ENCODE measurements at regions of chr1 and their contacts with region 1.

Region 1: GRCh38 chr1:154220071-154220969 is at the start of gene UBAP2L:
- DNase-seq: peak; percentile 99
- ATAC-seq: peak; percentile 88
- H3K4me3 Mint-ChIP-seq: peak within 1 kb of the TSS; percentile 99
- H3K27ac Mint-ChIP-seq: peak within 1 kb of the TSS; percentile 98
- H3K4me1 Mint-ChIP-seq: peaks cover 62% of the 10 kb centered on the region
- H3K27me3 Mint-ChIP-seq: no peaks in the 10 kb centered on the region
- total RNA-seq, gene UBAP2L: 176 to 179 TPM

Region 2: GRCh38 chr1:154183045-154183915 is 37.0 kb before region 1 on chr1:
- CTCF ChIA-PET with region 1: interaction called, 3 read pairs
- POLR2A ChIA-PET with region 1: interaction called, 18 read pairs
- DNase-seq: peak; percentile 97
- ATAC-seq: peak; percentile 72
- H3K4me3 Mint-ChIP-seq: peak overlapping the region; percentile 99
- H3K27ac Mint-ChIP-seq: peak overlapping the region; percentile 100
- H3K4me1 Mint-ChIP-seq: peaks cover 43% of the 10 kb centered on the region
- H3K27me3 Mint-ChIP-seq: peaks cover 6% of the 10 kb centered on the region

Region 3: GRCh38 chr1:154324669-154325582 is 104.6 kb after region 1 on chr1 and contains the start of gene ATP8B2:
- CTCF ChIA-PET with region 1: interaction called, 4 read pairs
- POLR2A ChIA-PET with region 1: interaction called, 10 read pairs
- DNase-seq: peak; percentile 87
- ATAC-seq: peak; percentile 59
- H3K4me3 Mint-ChIP-seq: peak within 1 kb of the TSS; percentile 92
- H3K27ac Mint-ChIP-seq: peak within 1 kb of the TSS; percentile 89
- H3K4me1 Mint-ChIP-seq: peaks cover 45% of the 10 kb centered on the region
- H3K27me3 Mint-ChIP-seq: peaks cover 21% of the 10 kb centered on the region
- total RNA-seq, gene ATP8B2: 65.3 to 71.6 TPM

Region 4: DNA sequence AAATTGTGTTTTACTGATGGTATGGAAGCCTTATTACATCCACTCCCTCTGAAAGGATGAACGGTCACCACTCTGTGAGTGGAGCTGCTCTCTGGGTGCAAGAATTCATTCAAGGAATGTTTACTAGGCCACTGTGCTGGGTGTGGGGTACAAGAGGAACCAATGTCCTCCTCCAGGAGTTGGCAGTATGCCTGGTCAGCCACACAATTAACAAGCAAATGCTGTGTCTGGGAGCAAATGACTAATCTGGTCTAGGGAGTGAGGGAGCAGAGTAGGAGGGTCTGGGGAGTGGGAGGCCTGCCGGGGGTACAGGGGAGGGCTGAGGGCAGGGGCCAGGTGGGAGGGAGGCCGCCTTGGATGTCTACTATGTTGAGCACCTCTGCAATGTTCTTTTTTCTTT is 254.5 kb after region 1 on chr1:
- CTCF ChIA-PET with region 1: no interaction called
- POLR2A ChIA-PET with region 1: no interaction called
- DNase-seq: no peak
- ATAC-seq: no peak
- H3K4me3 Mint-ChIP-seq: no peak overlapping the region
- H3K27ac Mint-ChIP-seq: no peak overlapping the region
- H3K4me1 Mint-ChIP-seq: peaks cover 6% of the 10 kb centered on the region
- H3K27me3 Mint-ChIP-seq: peaks cover 11% of the 10 kb centered on the region

Measured in activated CD8-positive, alpha-beta T cell treated with anti-CD3 and anti-CD28 coated beads, Interleukin-2, amount 10 ng/mL, durations not matched to agents 7 days and 5 days (primary cell).